ENCODE measurements at regions of chr10 and their contacts with region 1.

Region 1: DNA sequence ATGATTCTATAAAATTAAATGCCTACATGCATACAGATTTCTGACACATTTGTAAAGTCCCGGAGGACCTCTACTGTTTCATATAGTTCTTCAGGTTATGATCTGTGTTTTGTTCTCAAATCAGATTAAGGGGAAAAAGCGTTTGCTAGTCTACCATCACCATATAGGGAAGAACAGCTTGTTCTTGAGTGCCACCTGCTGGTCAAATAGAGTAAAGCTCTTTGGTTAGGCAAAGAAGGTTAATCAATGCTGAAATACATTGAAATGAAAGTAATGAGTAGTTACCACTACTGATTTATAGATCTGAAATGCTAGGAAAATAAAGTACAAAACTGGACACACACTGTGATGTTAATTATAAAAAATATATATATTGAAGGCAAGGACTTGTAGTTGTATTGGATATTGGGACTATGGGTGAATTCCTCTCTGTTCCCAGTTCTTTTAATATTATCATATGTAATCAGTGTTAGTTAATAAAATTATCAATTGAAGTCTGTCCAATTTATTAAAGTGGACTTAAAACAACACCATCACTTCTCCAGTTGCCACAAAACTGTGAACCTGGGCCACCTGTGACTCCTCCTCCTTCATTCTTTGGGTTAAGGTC is 72.6 kb upstream of the PDLIM1 start:
- DNase-seq: no peak
- ATAC-seq: no peak

Region 2: GRCh38 chr10:95183271-95184230 is 179.9 kb before region 1 on chr10:
- intact Hi-C with region 1: loop called (anchors 5 kb)
- DNase-seq: peak; percentile 93
- ATAC-seq: peak; percentile 98

Region 3: DNA sequence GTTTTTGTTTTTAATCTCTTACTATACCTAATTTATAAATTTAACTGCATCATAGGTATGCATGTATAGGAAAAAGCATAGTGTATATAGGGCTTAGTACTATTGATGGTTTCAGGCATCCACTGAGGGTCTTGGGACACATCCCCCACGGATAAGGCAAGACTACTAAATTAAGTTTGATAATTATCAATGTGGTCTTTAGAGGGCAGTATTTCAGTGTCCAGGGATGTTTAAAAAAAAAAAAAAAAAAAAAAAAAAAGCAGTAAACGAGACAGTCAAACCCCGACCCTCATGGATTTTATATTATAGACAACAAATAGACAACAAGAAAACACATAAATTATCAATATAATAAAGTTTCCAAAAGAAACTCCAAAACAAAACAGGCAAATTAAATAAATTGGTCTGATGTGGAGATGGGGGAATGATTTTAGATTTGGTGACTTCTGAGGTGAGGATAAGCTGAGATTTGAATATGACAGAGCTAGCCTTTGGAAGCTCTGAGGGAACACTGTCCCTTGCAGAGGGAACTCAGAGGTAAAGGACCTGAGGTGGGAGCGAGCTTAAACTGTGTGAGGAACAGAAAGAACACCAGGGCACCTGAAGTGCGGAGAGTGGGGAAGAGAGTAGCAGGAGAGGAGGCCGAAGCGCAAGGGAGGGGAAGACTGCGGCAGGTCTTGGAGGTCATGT is 154.6 kb before region 1 on chr10:
- intact Hi-C with region 1: loop called (anchors 5 kb)
- DNase-seq: no peak
- ATAC-seq: no peak

Region 4: GRCh38 chr10:95246579-95247051 is 116.8 kb before region 1 on chr10:
- intact Hi-C with region 1: loop called (anchors 2 kb)
- DNase-seq: peak; percentile 83
- ATAC-seq: peak; percentile 51

Region 5: DNA sequence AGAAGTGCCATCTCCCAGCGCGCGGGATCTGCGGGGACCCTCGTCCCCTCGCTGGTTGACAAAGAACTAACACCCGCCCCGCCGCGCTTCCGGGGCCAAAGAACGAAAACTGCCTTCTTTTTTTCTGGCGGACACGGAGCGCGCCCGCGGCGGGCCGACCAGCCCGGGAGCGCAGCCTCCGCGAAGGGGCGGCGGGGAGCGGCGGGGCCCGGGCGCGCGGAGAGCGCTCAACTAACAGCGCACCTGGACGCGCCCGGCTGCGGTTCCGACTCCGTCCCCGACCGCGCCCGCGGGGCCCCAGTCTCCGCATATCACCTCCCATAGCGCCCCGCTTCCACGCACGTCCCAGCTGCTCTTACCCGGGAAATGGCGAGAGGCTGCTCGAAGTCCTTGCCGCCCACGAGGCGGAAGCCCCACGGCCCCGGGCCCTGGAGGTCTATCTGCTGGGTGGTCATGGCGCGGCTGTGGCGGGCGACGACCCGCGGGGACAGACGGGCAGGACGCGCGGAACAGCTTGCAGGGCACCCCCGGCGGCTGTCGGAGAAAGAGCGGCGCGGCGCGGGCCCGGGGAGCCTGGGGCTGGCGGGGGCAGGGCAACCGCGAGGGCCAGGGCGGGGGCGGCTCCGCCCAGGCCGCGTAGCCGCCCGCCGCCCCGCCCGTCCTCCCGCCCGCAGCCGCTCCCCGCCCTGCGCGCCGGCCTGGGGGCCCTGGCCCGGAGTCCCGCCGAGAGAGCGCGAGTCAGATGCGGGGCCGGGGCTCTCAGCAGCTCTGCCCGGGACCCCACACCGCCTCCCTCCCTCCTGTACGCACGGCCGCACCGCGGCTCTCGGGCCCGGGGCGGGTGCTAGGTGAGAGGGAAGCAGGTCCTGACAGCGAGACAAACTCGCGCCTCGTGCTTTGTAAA is 72.7 kb before region 1 on chr10 and contains the start of gene PDLIM1:
- intact Hi-C with region 1: loop called (anchors 5 kb)
- DNase-seq: peak; percentile 89
- ATAC-seq: peak; percentile 89
- total RNA-seq, gene PDLIM1: 273 TPM

Region 6: GRCh38 chr10:95606922-95607321 is 243.5 kb after region 1 on chr10:
- intact Hi-C with region 1: no loop called
- DNase-seq: no peak
- ATAC-seq: no peak